A549 (cell line): ENCODE measurements at regions of chr5 and their contacts with region 1.

Region 1: GRCh38 chr5:132758451-132758850 is 11.2 kb downstream of the CCNI2 start:
- DNase-seq: no peak
- ATAC-seq: no peak
- H3K4me3 ChIP-seq: no peak overlapping the region
- H3K27ac ChIP-seq: no peak overlapping the region
- H3K4me1 ChIP-seq: no peaks in the 10 kb centered on the region
- CTCF ChIP-seq: no peak
- EP300 ChIP-seq: no peak
- POLR2A ChIP-seq: no peak
- RAD21 ChIP-seq: no peak

Region 2: DNA sequence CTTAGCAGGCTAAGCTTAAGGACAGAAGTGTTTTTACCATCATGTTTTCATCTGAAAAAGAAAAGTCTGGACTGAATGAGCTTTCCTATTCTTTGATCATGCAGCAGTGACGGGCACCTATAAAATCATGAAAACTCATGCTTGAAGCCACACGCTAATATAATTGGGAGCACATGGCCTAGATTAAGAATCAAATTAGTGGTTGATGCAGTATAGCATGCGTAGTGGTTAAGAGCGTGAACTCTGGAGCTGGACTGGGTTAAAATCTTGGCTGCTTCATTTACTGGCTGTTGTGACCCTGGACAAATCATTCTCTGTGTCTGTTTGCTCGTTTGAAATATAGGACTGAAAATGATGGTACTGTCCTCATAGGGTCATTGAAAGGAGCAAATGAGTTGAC is 150.3 kb before region 1 on chr5:
- CTCF ChIA-PET with region 1: no interaction called
- POLR2A ChIA-PET with region 1: no interaction called
- DNase-seq: no peak
- ATAC-seq: no peak
- H3K4me3 ChIP-seq: no peak overlapping the region
- H3K27ac ChIP-seq: no peak overlapping the region
- H3K4me1 ChIP-seq: no peaks in the 10 kb centered on the region
- CTCF ChIP-seq: no peak
- EP300 ChIP-seq: no peak
- POLR2A ChIP-seq: no peak
- RAD21 ChIP-seq: no peak

Region 3: DNA sequence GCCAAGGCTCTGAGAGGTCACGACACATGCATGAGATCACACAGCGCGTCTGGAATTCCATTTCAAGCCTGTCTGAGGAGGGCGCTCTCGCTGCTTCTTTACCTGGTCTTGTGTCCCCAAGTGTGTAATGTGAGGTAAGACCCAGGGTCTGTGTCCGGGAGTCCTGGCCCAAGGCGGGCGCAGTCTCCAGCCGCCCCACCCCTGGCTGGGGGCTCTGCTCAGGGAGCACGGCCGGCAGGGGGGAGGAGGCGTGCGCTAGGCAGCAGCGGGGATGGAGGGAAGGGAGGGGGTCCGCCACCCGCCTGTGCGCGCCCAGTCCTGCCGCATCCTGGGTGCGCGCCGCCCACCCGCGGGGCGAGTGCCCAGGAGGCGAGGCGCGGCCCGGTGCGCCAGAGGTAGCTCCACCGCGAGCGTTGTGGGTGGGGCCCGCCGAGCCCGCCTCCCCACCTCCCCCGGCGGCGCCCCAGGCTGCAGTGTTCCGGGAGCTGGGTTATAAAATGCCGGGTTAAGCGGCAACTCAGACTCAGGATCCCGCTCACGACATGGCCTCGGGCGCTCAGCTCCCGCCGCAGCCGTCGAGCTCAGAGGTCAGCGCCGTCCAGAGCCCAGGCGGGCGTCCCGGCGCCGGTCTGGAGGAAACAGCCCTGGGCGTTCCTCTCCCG is 11.4 kb before region 1 on chr5 and contains the start of gene CCNI2:
- CTCF ChIA-PET with region 1: interaction called, 14 read pairs
- POLR2A ChIA-PET with region 1: no interaction called
- DNase-seq: peak; percentile 65 to 71
- ATAC-seq: peak; percentile 82 to 86
- H3K4me3 ChIP-seq: peak within 1 kb of the TSS; percentile 73
- H3K27ac ChIP-seq: peak within 1 kb of the TSS; percentile 72 to 87
- H3K4me1 ChIP-seq: no peaks in the 10 kb centered on the region
- CTCF ChIP-seq: peak; percentile 69
- EP300 ChIP-seq: no peak
- POLR2A ChIP-seq: no peak; the same call in 1 of the 2 replicates
- RAD21 ChIP-seq: peak; percentile 40 to 52; a peak in 3 of 5 replicates
- polyA plus RNA-seq, gene CCNI2: 0.17 and 0.33 TPM in 2 replicates